MCF 10A (cell line): ENCODE measurements at regions of chr18 and their contacts with region 1.

Region 1: DNA sequence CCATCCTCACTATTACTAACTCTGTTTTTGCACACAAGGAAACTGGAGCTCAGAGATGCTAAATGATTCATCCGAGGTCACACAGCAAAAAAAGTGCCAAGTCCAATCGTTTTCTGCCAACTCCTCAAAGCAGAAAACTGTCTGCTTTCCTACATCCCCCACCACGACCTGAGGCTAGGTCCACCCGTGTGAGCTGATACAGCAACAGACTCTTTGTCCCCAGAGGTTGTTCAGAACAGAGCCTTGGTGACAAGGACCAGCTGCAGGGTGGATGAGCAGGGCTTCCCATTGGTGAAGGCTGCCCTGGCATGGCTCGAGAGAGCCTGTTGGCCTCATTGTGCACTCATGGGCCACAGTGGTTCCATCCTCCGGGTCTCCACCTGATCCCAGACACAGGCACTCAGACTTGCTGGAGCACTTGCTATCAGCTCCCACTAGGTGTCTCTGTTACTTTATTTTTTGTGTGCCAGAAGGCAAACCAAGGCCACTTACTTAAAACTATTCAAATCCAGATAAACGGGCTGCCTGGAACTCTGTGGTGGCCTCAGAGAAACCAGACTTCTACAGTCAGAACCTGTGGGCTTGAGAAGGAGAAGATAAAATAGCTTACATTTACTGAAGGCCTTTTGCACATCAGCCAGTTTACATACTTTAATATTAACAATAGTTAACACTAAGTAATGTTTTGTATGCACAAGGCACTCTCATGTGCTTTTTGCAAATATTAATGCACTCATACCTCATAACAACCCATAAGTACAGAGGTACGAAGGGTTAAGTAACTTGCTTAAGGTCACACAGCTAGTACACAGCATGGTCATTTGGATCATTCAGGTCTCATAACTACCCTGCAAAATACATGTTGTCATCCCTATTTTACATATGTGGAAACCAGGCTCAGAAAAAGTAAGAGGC is 62.9 kb upstream of the CTIF start:
- DNase-seq: peak; percentile 71
- H3K4me3 Mint-ChIP-seq: no peak overlapping the region
- H3K27ac Mint-ChIP-seq: no peak overlapping the region
- H3K4me1 Mint-ChIP-seq: peaks cover 5% of the 10 kb centered on the region
- H3K27me3 Mint-ChIP-seq: peaks cover 16% of the 10 kb centered on the region
- CTCF ChIP-seq: peak; percentile 86

Region 2: GRCh38 chr18:48460929-48461583 is 14.8 kb before region 1 on chr18:
- CTCF ChIA-PET with region 1: interaction called, 13 read pairs
- POLR2A ChIA-PET with region 1: interaction called, 4 read pairs
- intact Hi-C with region 1: no loop called
- DNase-seq: no peak
- H3K4me3 Mint-ChIP-seq: no peak overlapping the region
- H3K27ac Mint-ChIP-seq: no peak overlapping the region
- H3K4me1 Mint-ChIP-seq: peaks cover 2% of the 10 kb centered on the region
- H3K27me3 Mint-ChIP-seq: no peaks in the 10 kb centered on the region
- CTCF ChIP-seq: no peak

Region 3: GRCh38 chr18:48493434-48494230 is 17.7 kb after region 1 on chr18:
- CTCF ChIA-PET with region 1: interaction called, 11 read pairs
- POLR2A ChIA-PET with region 1: no interaction called
- intact Hi-C with region 1: no loop called
- DNase-seq: no peak
- H3K4me3 Mint-ChIP-seq: no peak overlapping the region
- H3K27ac Mint-ChIP-seq: no peak overlapping the region
- H3K4me1 Mint-ChIP-seq: peaks cover 20% of the 10 kb centered on the region
- H3K27me3 Mint-ChIP-seq: no peaks in the 10 kb centered on the region
- CTCF ChIP-seq: no peak

Region 4: DNA sequence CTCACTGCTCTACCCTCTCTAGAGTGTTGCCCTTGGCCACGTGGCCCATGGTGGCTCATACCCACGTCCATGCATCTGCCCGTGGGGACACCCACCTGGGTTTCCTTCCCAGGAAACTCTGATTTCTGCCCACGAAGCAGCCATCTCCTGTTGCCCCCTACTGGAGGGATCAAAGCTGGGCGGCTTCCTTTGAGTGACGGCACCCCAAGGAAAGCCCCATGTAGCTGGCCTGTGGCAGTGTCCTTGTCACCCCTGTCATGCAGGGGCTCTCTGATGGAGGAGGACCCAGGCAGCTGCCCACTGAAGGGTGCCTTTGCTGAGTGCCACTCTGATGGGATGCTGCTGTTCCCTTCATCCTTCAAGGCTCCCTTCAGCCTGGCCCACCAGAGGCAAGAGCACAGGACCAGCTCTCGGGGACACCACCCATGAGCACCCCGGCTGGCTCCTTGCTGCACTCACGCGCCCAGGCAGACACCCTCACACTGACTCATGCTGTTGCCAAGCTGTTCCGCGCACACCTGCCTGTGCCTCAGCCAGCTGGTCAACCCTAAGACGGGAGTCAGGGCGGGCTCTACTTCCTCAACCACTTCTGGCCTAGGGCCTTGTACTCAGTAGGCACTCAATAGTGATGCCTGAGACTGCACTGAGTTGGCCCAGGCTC is 164.0 kb after region 1 on chr18:
- CTCF ChIA-PET with region 1: interaction called, 18 read pairs
- POLR2A ChIA-PET with region 1: no interaction called
- intact Hi-C with region 1: no loop called
- DNase-seq: peak; percentile 13
- H3K4me3 Mint-ChIP-seq: no peak overlapping the region
- H3K27ac Mint-ChIP-seq: no peak overlapping the region
- H3K4me1 Mint-ChIP-seq: peaks cover 11% of the 10 kb centered on the region
- H3K27me3 Mint-ChIP-seq: no peaks in the 10 kb centered on the region
- CTCF ChIP-seq: no peak

Region 5: DNA sequence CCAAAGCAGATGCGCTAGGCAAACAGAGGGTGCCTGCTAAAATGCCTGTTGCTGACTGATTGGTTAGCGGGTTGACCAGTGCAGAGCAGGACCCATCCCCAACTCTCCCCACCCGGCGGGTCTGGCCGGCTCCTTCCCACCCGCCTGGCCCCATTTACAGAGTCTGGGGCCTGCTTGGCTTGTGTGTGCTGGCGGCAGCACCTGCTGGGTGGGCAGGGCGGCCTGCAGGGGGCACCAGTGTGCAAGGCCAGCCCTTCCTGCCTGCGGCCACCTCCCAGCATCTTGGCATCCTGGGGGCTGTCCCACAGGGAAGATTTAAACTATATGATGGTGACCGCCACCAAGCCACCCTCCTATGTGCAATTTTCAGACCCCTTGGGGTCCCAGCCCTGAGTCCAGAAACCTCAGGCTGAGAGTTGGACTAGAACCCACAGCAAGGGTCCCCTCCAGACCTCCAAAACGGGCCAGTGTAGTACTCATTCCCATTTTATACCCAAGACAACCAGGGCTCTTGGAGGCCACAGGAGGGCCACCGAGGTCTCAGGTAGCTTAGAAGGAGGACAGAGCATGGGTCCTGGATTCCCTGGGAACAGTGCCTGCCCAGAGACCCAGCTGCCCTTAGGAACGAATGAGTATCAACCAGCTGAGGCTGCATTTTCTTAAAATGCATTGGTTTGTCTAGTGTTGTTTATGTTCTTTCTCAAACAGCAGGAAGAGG is 301.3 kb after region 1 on chr18:
- CTCF ChIA-PET with region 1: no interaction called
- POLR2A ChIA-PET with region 1: no interaction called
- intact Hi-C with region 1: loop called (anchors 10 kb)
- DNase-seq: peak; percentile 59
- H3K4me3 Mint-ChIP-seq: no peak overlapping the region
- H3K27ac Mint-ChIP-seq: no peak overlapping the region
- H3K4me1 Mint-ChIP-seq: peaks cover 4% of the 10 kb centered on the region
- H3K27me3 Mint-ChIP-seq: no peaks in the 10 kb centered on the region
- CTCF ChIP-seq: peak; percentile 84

Region 6: DNA sequence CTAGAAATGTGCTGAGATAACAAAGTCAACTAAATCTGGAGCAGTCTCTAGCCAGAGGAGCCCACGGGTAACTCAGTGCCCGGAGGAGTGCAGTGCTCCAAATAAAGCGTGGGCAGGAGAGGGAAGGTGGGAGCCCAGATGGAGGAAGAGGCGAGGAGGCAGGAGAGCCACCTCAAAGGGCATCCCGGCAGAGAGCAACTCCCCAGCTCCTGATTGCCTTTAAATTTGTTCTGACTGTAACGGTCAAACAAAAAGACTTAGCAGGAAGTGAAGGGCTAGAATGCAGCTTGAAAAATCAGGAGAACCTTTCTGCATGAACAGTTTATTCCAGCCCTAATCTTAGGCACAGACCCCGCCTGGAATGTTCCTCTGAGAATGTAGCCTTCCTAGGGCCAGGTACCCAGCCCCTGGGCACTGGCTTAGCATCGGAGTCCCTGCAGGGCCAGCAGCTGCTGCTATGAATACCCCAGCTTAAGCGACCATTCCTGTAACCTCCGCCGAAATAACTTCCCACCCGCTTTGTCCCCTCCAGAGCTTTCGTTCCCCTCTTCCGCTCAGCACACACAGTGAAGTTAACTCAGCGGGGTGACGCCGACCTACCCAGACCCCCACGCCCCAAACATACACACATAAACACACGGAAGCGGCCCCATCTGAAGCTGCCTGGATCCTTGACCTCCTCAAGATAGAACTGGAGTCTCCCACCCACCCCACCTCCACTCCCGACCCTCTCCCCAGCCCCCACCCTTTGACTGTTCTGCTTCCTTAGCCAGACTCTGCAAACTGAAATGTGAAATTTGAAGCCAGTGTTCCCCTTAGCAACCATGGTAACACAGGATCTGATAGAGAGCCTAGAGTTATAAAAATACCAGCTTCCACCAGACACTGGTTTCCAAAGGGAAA is 351.6 kb after region 1 on chr18:
- CTCF ChIA-PET with region 1: no interaction called
- POLR2A ChIA-PET with region 1: no interaction called
- intact Hi-C with region 1: no loop called
- DNase-seq: no peak
- H3K4me3 Mint-ChIP-seq: no peak overlapping the region
- H3K27ac Mint-ChIP-seq: no peak overlapping the region
- H3K4me1 Mint-ChIP-seq: peaks cover 22% of the 10 kb centered on the region
- H3K27me3 Mint-ChIP-seq: no peaks in the 10 kb centered on the region
- CTCF ChIP-seq: no peak